ENCODE measurements at regions of chr10 and their contacts with region 1.

Region 1: GRCh38 chr10:3239066-3239919 is 66.7 kb upstream of the PITRM1 start:
- DNase-seq: peak; percentile 37 to 87 (median 74)
- ATAC-seq: peak; percentile 91 to 97 (median 94)
- H3K4me3 ChIP-seq: no peak overlapping the region
- H3K27ac ChIP-seq: no peak overlapping the region
- H3K4me1 ChIP-seq: no peaks in the 10 kb centered on the region
- H3K27me3 ChIP-seq: no peaks in the 10 kb centered on the region
- CTCF ChIP-seq: peak; percentile 65 to 84 (median 74)

Region 2: DNA sequence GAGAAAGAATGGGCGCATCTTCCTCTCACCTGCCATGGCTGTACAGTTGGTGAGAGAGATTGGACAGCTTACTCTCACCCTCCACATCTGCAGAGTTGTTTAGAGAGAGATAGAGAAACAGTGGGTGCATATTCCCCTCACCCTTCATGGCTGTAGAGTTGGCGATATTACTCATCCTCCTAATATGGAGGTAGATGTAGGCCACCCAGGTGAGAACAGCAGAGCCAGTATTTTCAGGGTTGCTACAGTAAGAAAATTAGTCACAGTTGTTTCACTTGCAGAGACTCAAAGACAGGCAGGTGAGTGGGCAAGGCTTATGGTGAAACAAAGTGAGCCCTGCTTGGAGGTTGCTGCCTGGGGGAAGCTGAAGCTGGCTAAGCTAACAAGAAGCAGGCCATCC is 237.0 kb before region 1 on chr10:
- intact Hi-C with region 1: no loop called
- DNase-seq: no peak
- ATAC-seq: no peak
- H3K4me3 ChIP-seq: no peak overlapping the region
- H3K27ac ChIP-seq: no peak overlapping the region
- H3K4me1 ChIP-seq: no peaks in the 10 kb centered on the region
- H3K27me3 ChIP-seq: no peaks in the 10 kb centered on the region
- CTCF ChIP-seq: no peak

Region 3: GRCh38 chr10:3668276-3668965 is 429.1 kb after region 1 on chr10:
- intact Hi-C with region 1: no loop called
- DNase-seq: peak in 4 of 6 donors; percentile 42 to 63 (median 48)
- ATAC-seq: peak; percentile 87 to 91 (median 90)
- H3K4me3 ChIP-seq: peak overlapping the region in 2 of 4 donors; percentile 19 to 27
- H3K27ac ChIP-seq: peak overlapping the region; percentile 15 to 68 (median 37)
- H3K4me1 ChIP-seq: peaks cover 0 to 6% (median 0%) of the 10 kb centered on the region in 3 donors
- H3K27me3 ChIP-seq: no peaks in the 10 kb centered on the region
- CTCF ChIP-seq: no peak

Region 4: DNA sequence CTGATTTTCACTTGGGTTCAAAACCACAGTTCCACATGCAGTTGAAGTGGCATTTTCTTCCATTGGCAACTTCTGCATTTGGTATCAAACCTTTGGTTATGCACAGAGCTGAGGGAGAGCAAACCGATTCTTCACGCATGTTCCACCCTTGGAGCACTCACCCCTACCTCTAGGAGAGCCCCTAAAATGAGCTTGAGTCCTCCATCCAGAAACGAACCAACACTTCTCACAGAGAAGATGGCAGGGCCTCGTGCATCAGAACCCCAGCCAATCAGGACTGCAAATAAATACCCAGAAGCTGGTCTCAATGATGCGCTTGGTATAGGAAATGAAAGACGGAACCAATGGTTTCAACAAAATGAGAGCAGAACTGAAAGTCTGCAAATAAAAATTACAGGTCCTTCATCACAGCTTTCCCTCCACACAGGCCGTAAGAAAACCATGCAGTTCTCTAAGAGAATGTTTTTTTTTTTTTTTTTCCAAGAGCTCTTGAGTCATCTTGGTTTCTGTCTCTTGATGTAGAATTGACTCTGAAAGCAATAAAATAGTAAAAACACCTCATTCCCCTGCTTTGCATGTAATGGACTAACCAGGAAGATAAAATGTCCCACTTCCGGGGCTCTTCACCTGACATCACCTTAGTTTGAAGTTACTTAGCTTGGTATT is 521.9 kb after region 1 on chr10:
- intact Hi-C with region 1: loop called in 1 of 3 experiments (anchors 10 kb)
- DNase-seq: no peak
- ATAC-seq: peak in 1 of 4 donors; percentile 40
- H3K4me3 ChIP-seq: no peak overlapping the region
- H3K27ac ChIP-seq: no peak overlapping the region
- H3K4me1 ChIP-seq: peaks cover 0 to 20% (median 0%) of the 10 kb centered on the region in 3 donors
- H3K27me3 ChIP-seq: no peaks in the 10 kb centered on the region
- CTCF ChIP-seq: no peak

Region 5: GRCh38 chr10:4663162-4663904 is 1424.0 kb after region 1 on chr10:
- intact Hi-C with region 1: loop called in 2 of 3 experiments (anchors 5 to 10 kb)
- DNase-seq: peak in 3 of 6 donors; percentile 35 to 65 (median 52)
- ATAC-seq: peak; percentile 91 to 97 (median 96)
- H3K4me3 ChIP-seq: no peak overlapping the region
- H3K27ac ChIP-seq: peak overlapping the region in 2 of 4 donors; percentile 72 to 75
- H3K4me1 ChIP-seq: peaks cover 0 to 13% (median 0%) of the 10 kb centered on the region in 3 donors
- H3K27me3 ChIP-seq: peaks cover 0 to 9% (median 1%) of the 10 kb centered on the region in 4 donors
- CTCF ChIP-seq: no peak

Measured in pancreas (tissue), 10 donors.